ENCODE measurements at regions of chr11 and their contacts with region 1.

Region 1: GRCh38 chr11:59255290-59255689 is 42.6 kb upstream of the MPEG1 start:
- DNase-seq: no peak

Region 2: GRCh38 chr11:59289356-59290181 is 34.3 kb after region 1 on chr11:
- intact Hi-C with region 1: loop called in 1 of 2 experiments (anchors 2 kb)
- DNase-seq: no peak

Measured in posterior vena cava (tissue), 2 donors.